ENCODE measurements at regions of chr17 and their contacts with region 1.

Region 1: DNA sequence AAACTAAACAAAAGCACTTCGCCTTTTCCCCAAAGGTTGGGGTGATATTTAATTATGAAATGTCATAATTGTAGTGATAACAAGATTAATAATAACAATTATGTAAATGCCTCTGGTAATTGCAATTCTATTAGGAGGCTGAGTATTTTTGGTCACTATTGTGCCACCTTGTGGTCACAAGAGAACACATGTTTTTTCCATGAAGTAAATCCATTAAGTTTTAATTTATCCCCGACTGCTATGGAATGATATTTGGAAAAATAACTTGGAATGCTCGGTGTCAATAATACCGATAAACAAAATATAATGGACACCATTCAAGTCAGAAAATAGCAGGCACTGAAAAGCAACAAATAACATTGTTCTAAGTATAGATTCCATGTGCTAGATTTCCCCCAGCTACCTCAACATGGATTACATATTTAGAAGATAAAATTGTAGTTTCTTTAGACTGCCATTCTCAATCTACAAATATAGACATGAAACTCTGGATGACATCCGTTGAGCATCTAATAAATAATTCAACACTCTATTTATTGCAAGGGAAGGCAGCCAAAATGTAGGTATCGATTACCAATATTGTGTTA is 25.0 kb upstream of the KCNJ2 start:
- DNase-seq: no peak
- ATAC-seq: no peak
- H3K4me3 ChIP-seq: no peak overlapping the region
- H3K27ac ChIP-seq: no peak overlapping the region
- H3K4me1 ChIP-seq: no peaks in the 10 kb centered on the region
- H3K27me3 ChIP-seq: no peaks in the 10 kb centered on the region
- CTCF ChIP-seq: peak; percentile 44 to 58 (median 45); a peak in 4 of 6 replicates
- EP300 ChIP-seq: no peak
- POLR2A ChIP-seq: no peak
- RAD21 ChIP-seq: peak; percentile 62

Region 2: DNA sequence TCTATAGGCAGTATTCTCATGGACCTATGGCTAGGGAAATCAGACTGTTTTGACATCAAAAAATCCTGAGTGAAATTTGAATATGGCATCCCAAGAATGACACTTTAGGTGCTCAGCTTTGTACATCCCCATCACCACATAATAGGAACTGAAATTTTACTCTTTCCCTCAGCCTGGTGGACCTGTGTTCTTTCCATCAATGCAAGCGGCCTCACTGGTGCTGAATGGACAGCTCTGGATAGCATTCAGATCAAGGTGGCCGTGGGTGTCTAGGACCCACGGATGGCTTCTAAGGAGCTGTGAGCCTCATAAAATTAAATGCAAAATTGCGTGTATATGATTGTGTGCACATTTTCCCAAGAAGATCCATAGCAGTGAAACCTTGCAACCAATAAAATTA is 577.2 kb before region 1 on chr17:
- CTCF ChIA-PET with region 1: no interaction called
- POLR2A ChIA-PET with region 1: no interaction called
- RAD21 ChIA-PET with region 1: no interaction called
- SMC1A ChIA-PET with region 1: no interaction called
- in situ Hi-C with region 1: loop called (anchors 10 kb)
- intact Hi-C with region 1: loop called (anchors 1 kb)
- DNase-seq: no peak
- ATAC-seq: no peak
- H3K4me3 ChIP-seq: no peak overlapping the region
- H3K27ac ChIP-seq: no peak overlapping the region
- H3K4me1 ChIP-seq: no peaks in the 10 kb centered on the region
- H3K27me3 ChIP-seq: no peaks in the 10 kb centered on the region
- CTCF ChIP-seq: no peak
- EP300 ChIP-seq: no peak
- POLR2A ChIP-seq: no peak
- RAD21 ChIP-seq: no peak

Region 3: DNA sequence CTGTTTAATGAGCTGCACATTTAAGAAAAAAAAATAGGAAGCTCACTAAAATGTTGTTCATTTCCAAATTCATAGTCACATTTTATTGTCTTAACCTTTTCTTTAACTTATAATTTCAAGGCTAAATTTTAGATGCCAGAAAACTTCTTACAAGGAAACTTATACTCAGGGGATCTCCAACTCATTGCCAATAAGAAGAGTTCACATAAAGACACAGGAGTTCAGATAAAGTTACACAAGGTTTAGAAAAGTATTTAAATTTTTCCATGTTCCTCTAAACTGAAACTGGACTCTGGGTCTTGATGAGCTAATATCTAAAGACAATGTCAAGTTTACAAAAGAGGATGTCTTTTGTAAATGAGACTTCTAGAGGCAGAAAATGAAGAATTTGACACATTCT is 260.0 kb before region 1 on chr17:
- CTCF ChIA-PET with region 1: interaction called, 3 read pairs
- POLR2A ChIA-PET with region 1: no interaction called
- RAD21 ChIA-PET with region 1: no interaction called
- SMC1A ChIA-PET with region 1: no interaction called
- in situ Hi-C with region 1: no loop called
- intact Hi-C with region 1: loop called (anchors 10 kb)
- DNase-seq: no peak
- ATAC-seq: no peak
- H3K4me3 ChIP-seq: no peak overlapping the region
- H3K27ac ChIP-seq: no peak overlapping the region
- H3K4me1 ChIP-seq: no peaks in the 10 kb centered on the region
- H3K27me3 ChIP-seq: no peaks in the 10 kb centered on the region
- CTCF ChIP-seq: no peak
- EP300 ChIP-seq: no peak
- POLR2A ChIP-seq: no peak
- RAD21 ChIP-seq: no peak

Region 4: DNA sequence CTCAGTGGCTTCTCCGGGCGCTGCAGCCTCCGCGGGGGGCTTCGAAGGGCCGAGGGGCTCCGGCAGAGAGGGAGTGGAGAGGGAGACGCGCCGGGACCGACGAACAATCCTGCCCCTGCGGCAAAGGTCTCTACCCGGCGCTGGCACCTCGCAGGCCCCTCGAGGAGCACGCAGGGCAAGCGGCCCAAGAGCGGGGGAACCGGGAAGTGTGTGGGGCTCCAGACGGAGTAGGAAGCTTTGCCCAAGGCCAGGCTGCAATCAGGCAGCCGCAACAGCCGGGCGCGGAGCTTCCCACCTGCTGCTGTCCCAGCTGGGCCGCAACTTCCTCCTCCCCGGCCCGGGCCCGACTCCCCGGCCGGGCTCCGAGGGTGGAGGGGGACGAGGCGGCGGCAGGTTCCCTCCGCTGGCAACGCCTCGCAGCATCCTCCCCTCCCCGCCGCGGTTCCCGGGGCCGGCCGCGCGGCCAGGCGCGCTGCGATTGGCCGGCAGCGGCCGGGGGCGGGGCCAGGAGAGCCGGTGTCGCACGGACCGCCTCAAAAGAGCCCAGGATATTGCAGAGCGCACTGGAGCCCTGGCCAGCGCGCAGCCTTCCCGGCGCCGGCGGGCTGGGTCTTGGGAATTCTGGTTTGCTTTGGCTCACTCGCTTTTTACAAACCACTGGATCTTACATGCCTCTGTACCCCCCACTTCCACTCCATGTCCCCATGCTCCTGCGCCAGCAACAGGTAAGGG is 24.8 kb after region 1 on chr17 and contains the start of gene KCNJ2:
- CTCF ChIA-PET with region 1: interaction called, 4 read pairs
- POLR2A ChIA-PET with region 1: no interaction called
- RAD21 ChIA-PET with region 1: no interaction called
- SMC1A ChIA-PET with region 1: interaction called, 12 read pairs
- in situ Hi-C with region 1: no loop called
- intact Hi-C with region 1: no loop called
- DNase-seq: no peak
- ATAC-seq: peak; percentile 95
- H3K4me3 ChIP-seq: peak within 1 kb of the TSS; percentile 38
- H3K27ac ChIP-seq: no peak within 1 kb of the TSS
- H3K4me1 ChIP-seq: peaks cover 8% of the 10 kb centered on the region
- H3K27me3 ChIP-seq: peaks cover 0 to 10% of the 10 kb centered on the region in 2 experiments; a peak in 1 of 4 replicates
- CTCF ChIP-seq: no peak
- EP300 ChIP-seq: no peak
- POLR2A ChIP-seq: no peak
- RAD21 ChIP-seq: no peak
- polyA plus RNA-seq, gene KCNJ2: 1.6 to 3.0 TPM

Region 5: DNA sequence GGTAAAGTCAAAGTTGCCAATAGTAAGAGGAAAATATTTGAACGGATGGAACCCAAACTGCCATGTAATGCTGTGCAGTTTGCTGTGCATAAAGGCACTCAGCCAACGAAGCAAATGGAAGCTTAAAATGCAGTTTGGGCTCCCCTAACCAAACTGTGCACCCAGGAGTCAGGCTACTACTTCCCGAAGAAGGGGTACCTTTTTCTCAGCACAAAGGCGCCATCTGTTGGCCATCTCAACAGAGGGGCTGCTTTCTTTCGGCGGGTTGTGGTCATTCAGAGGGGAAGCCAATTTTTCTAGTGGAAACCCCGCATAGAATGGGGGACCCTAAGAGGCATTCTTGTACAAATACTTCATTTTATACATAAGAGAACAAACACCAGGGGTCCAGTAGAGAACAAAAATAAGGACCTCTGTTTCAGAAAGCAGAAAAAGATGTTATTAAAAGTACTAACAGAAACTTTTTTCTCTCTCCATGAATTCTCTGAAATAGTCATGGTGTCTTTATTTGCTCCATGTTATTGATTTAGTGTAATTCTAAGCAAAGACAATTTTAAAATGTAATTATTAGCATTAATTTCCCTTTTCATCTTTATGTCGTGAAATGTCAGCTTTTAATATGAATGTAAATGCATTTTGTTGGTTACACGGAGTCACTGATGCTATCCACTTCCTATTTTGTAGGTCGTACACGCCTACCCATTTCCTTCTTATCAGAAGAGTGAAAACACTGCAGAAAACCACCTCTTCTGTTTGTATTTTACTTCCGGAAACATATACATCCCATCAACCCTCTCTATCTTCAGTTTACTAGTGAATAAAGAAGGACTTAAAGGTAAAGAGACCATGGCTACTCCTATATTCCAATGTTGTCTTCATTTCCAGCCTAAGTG is 478.3 kb after region 1 on chr17:
- CTCF ChIA-PET with region 1: no interaction called
- POLR2A ChIA-PET with region 1: no interaction called
- RAD21 ChIA-PET with region 1: no interaction called
- SMC1A ChIA-PET with region 1: no interaction called
- in situ Hi-C with region 1: no loop called
- intact Hi-C with region 1: loop called (anchors 10 kb)
- DNase-seq: no peak
- ATAC-seq: peak; percentile 85
- H3K4me3 ChIP-seq: no peak overlapping the region
- H3K27ac ChIP-seq: no peak overlapping the region
- H3K4me1 ChIP-seq: no peaks in the 10 kb centered on the region
- H3K27me3 ChIP-seq: no peaks in the 10 kb centered on the region
- CTCF ChIP-seq: peak; percentile 25 to 58 (median 57); a peak in 5 of 6 replicates
- EP300 ChIP-seq: no peak
- POLR2A ChIP-seq: no peak
- RAD21 ChIP-seq: peak; percentile 74

Measured in GM12878 (cell line).